ENCODE measurements at regions of chr17 and their contacts with region 1.

Region 1: DNA sequence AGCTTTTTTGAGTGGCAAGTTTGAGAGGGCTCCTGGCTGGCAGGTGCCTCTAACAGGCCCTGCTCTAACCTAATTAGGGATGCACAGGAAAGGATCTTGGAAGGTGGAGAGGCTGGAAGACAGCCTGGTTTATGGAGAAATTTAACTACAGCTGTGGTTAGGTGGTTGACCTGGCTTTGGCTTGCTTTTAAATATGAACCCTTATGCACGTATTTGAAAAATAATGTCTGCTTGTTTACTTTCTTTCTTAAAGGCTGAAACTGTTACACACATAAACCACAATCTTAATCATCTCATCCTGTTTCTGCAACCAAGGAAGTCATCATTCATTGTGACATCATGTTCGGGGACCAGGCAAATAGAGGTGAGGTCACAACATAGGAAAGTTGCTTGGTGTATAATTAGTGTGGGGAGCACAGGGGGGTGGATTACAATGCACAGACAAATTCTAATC is 23.1 kb upstream of the DHRS13 start:
- DNase-seq: peak; percentile 53
- H3K4me3 Mint-ChIP-seq: peak overlapping the region; percentile 50
- H3K27ac Mint-ChIP-seq: peak overlapping the region; percentile 87
- H3K4me1 Mint-ChIP-seq: peaks cover 59% of the 10 kb centered on the region
- H3K27me3 Mint-ChIP-seq: no peaks in the 10 kb centered on the region

Region 2: GRCh38 chr17:28743225-28744103 is 182.5 kb before region 1 on chr17 and contains the start of gene TRAF4:
- CTCF ChIA-PET with region 1: no interaction called
- POLR2A ChIA-PET with region 1: no interaction called
- intact Hi-C with region 1: no loop called
- DNase-seq: peak; percentile 83
- H3K4me3 Mint-ChIP-seq: peak within 1 kb of the TSS; percentile 90
- H3K27ac Mint-ChIP-seq: peak within 1 kb of the TSS; percentile 89
- H3K4me1 Mint-ChIP-seq: peaks cover 32% of the 10 kb centered on the region
- H3K27me3 Mint-ChIP-seq: no peaks in the 10 kb centered on the region
- total RNA-seq, gene TRAF4: 83.0 to 83.9 TPM

Region 3: DNA sequence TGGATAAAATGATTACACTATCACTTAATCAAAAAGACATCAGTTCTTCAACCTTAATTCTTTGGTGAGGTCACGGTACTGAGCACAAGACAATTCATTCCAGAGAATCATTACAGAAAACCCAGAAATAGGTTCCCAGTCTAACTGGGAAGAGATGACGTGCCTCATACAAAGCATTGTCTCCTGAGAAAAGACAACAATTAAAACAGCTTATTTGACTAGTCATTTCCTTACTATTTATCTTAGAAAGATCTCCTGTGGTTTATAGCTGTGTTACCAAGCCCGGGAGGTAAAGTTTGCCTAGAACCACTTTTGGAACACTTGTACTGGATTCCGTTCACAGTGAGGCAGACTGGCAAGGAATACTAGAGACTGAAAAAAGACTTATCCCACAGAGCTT is 20.3 kb after region 1 on chr17:
- CTCF ChIA-PET with region 1: interaction called, 4 read pairs
- POLR2A ChIA-PET with region 1: interaction called, 9 read pairs
- intact Hi-C with region 1: loop called (anchors 1 kb)
- DNase-seq: no peak
- H3K4me3 Mint-ChIP-seq: peak overlapping the region; percentile 36
- H3K27ac Mint-ChIP-seq: peak overlapping the region; percentile 68
- H3K4me1 Mint-ChIP-seq: peaks cover 68% of the 10 kb centered on the region
- H3K27me3 Mint-ChIP-seq: no peaks in the 10 kb centered on the region

Region 4: GRCh38 chr17:28973425-28973824 is 47.5 kb after region 1 on chr17:
- CTCF ChIA-PET with region 1: no interaction called
- POLR2A ChIA-PET with region 1: no interaction called
- intact Hi-C with region 1: no loop called
- DNase-seq: no peak
- H3K4me3 Mint-ChIP-seq: no peak overlapping the region
- H3K27ac Mint-ChIP-seq: no peak overlapping the region
- H3K4me1 Mint-ChIP-seq: no peaks in the 10 kb centered on the region
- H3K27me3 Mint-ChIP-seq: no peaks in the 10 kb centered on the region